ENCODE measurements at regions of chr6 and their contacts with region 1.

Region 1: GRCh38 chr6:31575335-31575901 is at the start of gene TNF:
- DNase-seq: peak; percentile 93
- H3K4me3 Mint-ChIP-seq: peak within 1 kb of the TSS; percentile 97
- H3K27ac Mint-ChIP-seq: peak within 1 kb of the TSS; percentile 99
- H3K4me1 Mint-ChIP-seq: peaks cover 54% of the 10 kb centered on the region
- H3K27me3 Mint-ChIP-seq: peaks cover 2% of the 10 kb centered on the region
- total RNA-seq, gene TNF: 165 to 167 TPM

Region 2: GRCh38 chr6:31407699-31408098 is 167.7 kb before region 1 on chr6:
- CTCF ChIA-PET with region 1: no interaction called
- POLR2A ChIA-PET with region 1: no interaction called
- intact Hi-C with region 1: no loop called
- DNase-seq: no peak
- H3K4me3 Mint-ChIP-seq: no peak overlapping the region
- H3K27ac Mint-ChIP-seq: no peak overlapping the region
- H3K4me1 Mint-ChIP-seq: peaks cover 47% of the 10 kb centered on the region
- H3K27me3 Mint-ChIP-seq: no peaks in the 10 kb centered on the region

Region 3: GRCh38 chr6:31479933-31480535 is 95.4 kb before region 1 on chr6:
- CTCF ChIA-PET with region 1: no interaction called
- POLR2A ChIA-PET with region 1: no interaction called
- intact Hi-C with region 1: no loop called
- DNase-seq: no peak
- H3K4me3 Mint-ChIP-seq: no peak overlapping the region
- H3K27ac Mint-ChIP-seq: no peak overlapping the region
- H3K4me1 Mint-ChIP-seq: peaks cover 9% of the 10 kb centered on the region
- H3K27me3 Mint-ChIP-seq: no peaks in the 10 kb centered on the region

Region 4: GRCh38 chr6:31493875-31494694 is 81.3 kb before region 1 on chr6:
- CTCF ChIA-PET with region 1: interaction called, 5 read pairs
- POLR2A ChIA-PET with region 1: interaction called, 16 read pairs
- intact Hi-C with region 1: no loop called
- DNase-seq: peak; percentile 89
- H3K4me3 Mint-ChIP-seq: peak overlapping the region; percentile 90
- H3K27ac Mint-ChIP-seq: peak overlapping the region; percentile 94
- H3K4me1 Mint-ChIP-seq: peaks cover 42% of the 10 kb centered on the region
- H3K27me3 Mint-ChIP-seq: no peaks in the 10 kb centered on the region

Region 5: DNA sequence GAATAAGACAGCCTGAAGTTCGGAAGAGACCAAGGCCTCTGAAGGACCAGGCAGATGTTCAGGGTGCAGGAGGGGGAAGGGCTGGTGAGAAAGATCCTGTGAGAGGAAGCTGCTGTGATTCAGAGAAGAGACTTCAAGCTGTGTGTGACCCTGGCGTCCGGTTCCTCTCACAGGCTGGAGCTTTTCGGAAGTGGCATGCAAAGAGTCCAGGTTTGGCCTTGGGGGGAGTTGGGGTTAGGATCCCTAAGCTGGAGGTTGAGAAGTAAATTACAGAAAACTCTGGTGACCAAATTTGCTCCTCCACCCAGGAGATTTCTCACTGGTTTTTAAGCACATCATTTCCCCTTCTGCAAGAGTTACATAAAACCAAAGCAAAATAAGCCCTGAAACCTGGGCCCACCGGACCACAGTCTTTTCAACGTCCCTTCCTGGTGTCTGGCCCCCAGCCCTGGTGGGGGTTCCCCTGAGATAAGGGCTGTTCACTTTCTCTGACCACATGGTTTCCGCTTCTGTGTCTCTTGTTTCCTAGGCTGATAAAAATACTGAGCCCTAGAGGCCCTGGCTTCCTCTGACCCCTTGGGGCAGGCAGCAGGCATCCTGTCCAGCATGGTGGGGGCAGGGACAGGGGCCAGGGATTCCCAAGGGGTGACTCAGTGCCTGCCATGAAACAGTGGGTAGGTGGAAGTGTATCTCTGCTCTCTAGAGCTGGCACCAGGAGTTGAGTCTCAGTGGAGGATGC is 15.3 kb before region 1 on chr6:
- CTCF ChIA-PET with region 1: interaction called, 1,658 read pairs
- POLR2A ChIA-PET with region 1: interaction called, 259 read pairs
- intact Hi-C with region 1: loop called (anchors 1 kb)
- DNase-seq: peak; percentile 81
- H3K4me3 Mint-ChIP-seq: peak overlapping the region; percentile 59
- H3K27ac Mint-ChIP-seq: peak overlapping the region; percentile 86
- H3K4me1 Mint-ChIP-seq: peaks cover 80% of the 10 kb centered on the region
- H3K27me3 Mint-ChIP-seq: no peaks in the 10 kb centered on the region

Region 6: DNA sequence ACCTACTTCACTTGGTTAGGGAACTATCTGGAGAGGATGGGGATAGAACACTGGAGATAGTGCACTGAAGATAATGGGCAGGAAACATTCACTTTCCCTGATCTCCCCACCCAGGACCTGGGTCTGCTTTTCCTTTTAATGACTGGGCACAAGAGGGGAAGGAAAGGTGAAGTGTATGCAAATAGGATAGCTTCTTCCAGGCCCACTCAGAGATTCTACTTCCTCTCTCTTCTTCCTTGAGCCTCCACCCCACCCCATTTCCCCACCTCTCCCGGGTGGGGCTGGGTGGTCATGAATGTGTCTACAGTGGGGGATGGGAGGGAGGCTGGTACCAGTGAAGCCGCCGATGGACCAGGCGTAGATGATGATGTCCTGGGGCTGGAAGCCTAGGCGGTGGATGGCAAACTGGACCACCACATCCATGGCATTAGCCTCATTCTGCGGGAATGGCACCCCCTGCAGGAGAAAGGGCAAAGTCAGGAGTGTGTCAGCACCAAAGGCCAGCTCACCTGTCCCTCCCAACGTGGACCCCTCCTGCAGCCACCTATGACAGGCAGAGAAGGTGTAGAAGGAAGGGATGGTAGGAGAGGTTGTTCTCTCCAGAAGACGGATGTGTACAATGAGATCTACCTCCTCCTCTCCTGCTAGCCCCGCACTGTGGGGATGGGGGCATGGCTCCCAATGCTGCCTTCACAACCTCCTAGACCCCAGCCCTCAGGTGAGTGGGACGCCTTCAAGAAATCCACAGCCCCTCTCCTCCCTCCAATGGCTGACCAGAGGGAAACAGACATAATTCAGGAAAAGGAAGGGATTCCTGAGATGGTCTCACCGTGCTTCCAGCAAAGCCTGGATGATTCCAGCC is 114.1 kb after region 1 on chr6:
- CTCF ChIA-PET with region 1: no interaction called
- POLR2A ChIA-PET with region 1: no interaction called
- intact Hi-C with region 1: no loop called
- DNase-seq: no peak
- H3K4me3 Mint-ChIP-seq: no peak overlapping the region
- H3K27ac Mint-ChIP-seq: peak overlapping the region; percentile 47
- H3K4me1 Mint-ChIP-seq: peaks cover 5% of the 10 kb centered on the region
- H3K27me3 Mint-ChIP-seq: no peaks in the 10 kb centered on the region

Region 7: GRCh38 chr6:31784098-31784925 is 208.9 kb after region 1 on chr6:
- CTCF ChIA-PET with region 1: no interaction called
- POLR2A ChIA-PET with region 1: no interaction called
- intact Hi-C with region 1: no loop called
- DNase-seq: no peak
- H3K4me3 Mint-ChIP-seq: no peak overlapping the region
- H3K27ac Mint-ChIP-seq: no peak overlapping the region
- H3K4me1 Mint-ChIP-seq: peaks cover 3% of the 10 kb centered on the region
- H3K27me3 Mint-ChIP-seq: no peaks in the 10 kb centered on the region

Region 8: GRCh38 chr6:32195652-32195901 is 620.2 kb after region 1 on chr6:
- CTCF ChIA-PET with region 1: no interaction called
- POLR2A ChIA-PET with region 1: no interaction called
- intact Hi-C with region 1: loop called (anchors 10 kb)
- DNase-seq: peak; percentile 100
- H3K4me3 Mint-ChIP-seq: peak overlapping the region; percentile 96
- H3K27ac Mint-ChIP-seq: peak overlapping the region; percentile 98
- H3K4me1 Mint-ChIP-seq: peaks cover 23% of the 10 kb centered on the region
- H3K27me3 Mint-ChIP-seq: no peaks in the 10 kb centered on the region

Measured in activated CD4-positive, alpha-beta memory T cell treated with anti-CD3 and anti-CD28 coated beads for 36 hours (primary cell).